CD8-positive, alpha-beta T cell (primary cell): ENCODE measurements at regions of chr19 and their contacts with region 1.

Region 1: DNA sequence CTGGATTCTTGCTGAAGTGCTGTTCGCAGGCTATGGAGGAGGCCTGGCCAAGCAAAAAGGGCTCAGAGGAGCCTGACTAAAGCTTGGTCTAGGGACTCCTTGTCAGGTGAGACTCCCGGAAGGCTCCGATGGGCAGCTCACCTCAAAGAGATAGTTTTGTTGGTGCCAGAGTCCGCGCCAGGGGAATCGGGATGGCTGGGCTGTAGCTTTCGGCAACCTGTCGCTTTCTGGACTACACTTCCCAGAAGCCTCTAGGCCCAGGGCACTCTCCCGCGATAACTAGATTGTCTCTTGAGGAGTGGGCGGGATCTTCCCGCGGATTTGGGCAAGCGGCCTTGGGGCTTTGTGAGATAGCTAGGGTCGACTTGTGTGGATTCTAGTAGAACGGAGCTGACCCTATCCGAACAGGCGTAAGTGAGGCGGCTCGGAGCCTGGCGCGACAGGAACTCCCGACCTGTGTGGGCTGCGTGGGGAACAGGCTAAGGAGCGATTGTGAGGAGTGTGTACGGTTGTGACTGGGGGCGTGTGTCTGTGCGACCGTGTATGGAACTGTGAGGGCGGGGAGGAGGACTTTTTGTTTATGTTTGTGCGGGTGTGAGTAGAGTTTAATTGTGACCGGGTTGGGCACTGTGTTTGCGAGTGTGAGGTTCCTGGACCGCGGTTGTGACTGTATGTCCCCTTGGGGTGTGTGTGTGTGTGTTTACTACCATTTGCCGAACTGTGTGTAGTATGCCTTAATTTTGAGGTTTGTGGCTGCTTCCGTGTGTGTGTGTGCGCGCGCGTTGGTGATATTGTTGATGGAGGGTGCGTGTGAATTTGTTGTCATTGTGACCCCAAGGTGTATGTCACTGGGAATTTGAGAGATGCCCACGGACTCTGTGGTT is at the start of gene ZNF345:
- DNase-seq: peak; percentile 66 to 94 (median 85)
- ATAC-seq: peak; percentile 81
- H3K4me3 ChIP-seq: peak within 1 kb of the TSS; percentile 83 to 92
- H3K4me3 Mint-ChIP-seq: no peak within 1 kb of the TSS
- H3K27ac ChIP-seq: peak within 1 kb of the TSS; percentile 74 to 94
- H3K27ac Mint-ChIP-seq: no peak within 1 kb of the TSS
- H3K4me1 ChIP-seq: peaks cover 14% of the 10 kb centered on the region
- H3K4me1 Mint-ChIP-seq: peaks cover 20% of the 10 kb centered on the region
- H3K27me3 ChIP-seq: peaks cover 0 to 2% of the 10 kb centered on the region in 2 experiments
- H3K27me3 Mint-ChIP-seq: no peaks in the 10 kb centered on the region
- CTCF ChIP-seq: no peak
- total RNA-seq, gene ZNF345: 7.8 to 8.0 TPM

Region 2: DNA sequence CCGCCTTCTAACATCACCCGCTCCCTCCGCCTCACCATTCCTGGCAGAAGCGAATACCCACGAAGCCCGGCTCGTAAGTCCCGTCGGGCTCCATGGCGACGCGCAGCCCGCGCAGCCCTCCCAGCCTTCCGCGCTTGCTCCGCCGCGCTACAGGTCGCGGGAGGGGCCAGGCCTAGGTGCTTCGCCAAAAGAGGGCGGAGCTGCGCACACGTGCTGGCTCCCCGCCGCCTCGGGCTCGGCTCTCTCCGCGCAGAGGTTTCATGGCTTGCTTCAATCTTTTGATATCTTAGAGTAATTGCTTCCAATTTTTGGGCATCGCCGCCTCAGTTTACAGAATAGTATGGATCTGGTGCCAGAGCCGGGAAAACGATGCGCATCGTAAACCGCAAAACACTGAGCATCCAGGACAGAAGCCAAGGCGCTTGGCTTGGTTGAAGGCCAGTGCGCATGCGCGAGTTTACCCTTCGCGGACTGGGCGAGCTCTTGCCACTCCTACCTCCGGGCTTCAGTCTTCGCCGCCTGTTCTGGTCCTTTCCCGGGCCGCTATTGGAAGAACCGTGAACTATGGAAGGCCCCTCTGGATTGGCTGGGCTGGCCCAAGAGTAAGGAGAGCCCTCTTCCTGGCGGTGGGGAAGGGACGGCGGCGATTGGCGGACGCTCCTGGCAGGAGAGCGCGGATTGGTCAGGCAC is 735.9 kb before region 1 on chr19 and contains the start of gene POLR2I:
- CTCF ChIA-PET with region 1: no interaction called
- POLR2A ChIA-PET with region 1: no interaction called
- intact Hi-C with region 1: loop called in 1 of 2 experiments (anchors 1 kb)
- DNase-seq: peak; percentile 96 to 100 (median 99)
- ATAC-seq: peak; percentile 85
- H3K4me3 ChIP-seq: peak within 1 kb of the TSS; percentile 71 to 73
- H3K4me3 Mint-ChIP-seq: peak within 1 kb of the TSS; percentile 92
- H3K27ac ChIP-seq: peak within 1 kb of the TSS; percentile 77 to 92
- H3K27ac Mint-ChIP-seq: peak within 1 kb of the TSS; percentile 97
- H3K4me1 ChIP-seq: peaks cover 18% of the 10 kb centered on the region
- H3K4me1 Mint-ChIP-seq: peaks cover 39% of the 10 kb centered on the region
- H3K27me3 ChIP-seq: no peaks in the 10 kb centered on the region
- H3K27me3 Mint-ChIP-seq: no peaks in the 10 kb centered on the region
- CTCF ChIP-seq: no peak
- total RNA-seq, gene POLR2I: 27.4 to 34.7 TPM

Region 3: DNA sequence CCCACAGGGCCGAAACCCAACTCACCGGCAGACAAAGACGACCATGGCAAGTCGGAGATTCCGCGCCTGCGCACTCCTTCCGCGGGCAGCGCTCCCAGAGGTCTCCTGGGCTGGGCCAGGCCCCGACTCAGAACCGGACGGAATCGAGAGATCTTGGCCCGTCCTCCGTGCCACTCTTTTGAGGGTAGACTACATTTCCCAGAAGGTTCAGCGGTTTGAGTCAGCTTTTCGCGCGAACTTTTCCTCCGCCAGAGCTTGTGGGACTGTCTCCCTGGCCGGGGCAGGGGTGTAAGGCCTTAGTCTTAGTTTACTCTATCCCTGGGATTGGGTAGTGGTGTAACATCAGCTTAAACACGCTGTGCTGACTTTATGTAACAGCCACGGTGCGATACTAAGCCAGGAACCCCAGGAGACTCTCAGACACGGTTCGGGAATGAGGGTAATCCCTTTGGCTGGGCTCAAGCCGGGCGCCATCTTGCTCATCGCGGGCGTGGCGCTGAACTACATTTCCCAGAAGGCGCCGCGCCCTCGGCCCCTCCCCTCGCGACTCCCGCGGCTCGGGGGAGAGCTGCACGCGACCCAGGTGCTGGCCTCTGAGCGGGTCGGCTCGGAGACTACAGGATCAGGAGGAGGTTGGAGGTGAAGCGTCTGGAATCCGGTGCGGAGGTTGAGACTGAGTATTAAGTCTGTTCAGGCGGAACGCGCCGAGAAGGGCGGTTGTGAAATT is 322.4 kb before region 1 on chr19 and contains the start of gene ZNF260:
- CTCF ChIA-PET with region 1: interaction called, 3 read pairs
- POLR2A ChIA-PET with region 1: no interaction called
- intact Hi-C with region 1: loop called in 1 of 2 experiments (anchors 1 kb)
- DNase-seq: peak; percentile 77 to 96 (median 92)
- ATAC-seq: peak; percentile 90
- H3K4me3 ChIP-seq: peak within 1 kb of the TSS; percentile 64 to 85
- H3K4me3 Mint-ChIP-seq: peak within 1 kb of the TSS; percentile 99
- H3K27ac ChIP-seq: peak within 1 kb of the TSS; percentile 52 to 84
- H3K27ac Mint-ChIP-seq: peak within 1 kb of the TSS; percentile 96
- H3K4me1 ChIP-seq: peaks cover 21% of the 10 kb centered on the region
- H3K4me1 Mint-ChIP-seq: peaks cover 28% of the 10 kb centered on the region
- H3K27me3 ChIP-seq: no peaks in the 10 kb centered on the region
- H3K27me3 Mint-ChIP-seq: no peaks in the 10 kb centered on the region
- CTCF ChIP-seq: no peak
- total RNA-seq, gene ZNF260: 2.8 to 4.6 TPM

Region 4: GRCh38 chr19:36796076-36796992 is 54.5 kb before region 1 on chr19:
- CTCF ChIA-PET with region 1: no interaction called
- POLR2A ChIA-PET with region 1: interaction called, 6 read pairs
- intact Hi-C with region 1: loop called (anchors 1 kb)
- DNase-seq: no peak
- ATAC-seq: no peak
- H3K4me3 ChIP-seq: peak overlapping the region; percentile 92 to 97
- H3K4me3 Mint-ChIP-seq: peak overlapping the region; percentile 97
- H3K27ac ChIP-seq: peak overlapping the region; percentile 76 to 90
- H3K27ac Mint-ChIP-seq: peak overlapping the region; percentile 98
- H3K4me1 ChIP-seq: peaks cover 3% of the 10 kb centered on the region
- H3K4me1 Mint-ChIP-seq: peaks cover 21% of the 10 kb centered on the region
- H3K27me3 ChIP-seq: no peaks in the 10 kb centered on the region
- H3K27me3 Mint-ChIP-seq: peaks cover 6% of the 10 kb centered on the region
- CTCF ChIP-seq: no peak

Region 5: DNA sequence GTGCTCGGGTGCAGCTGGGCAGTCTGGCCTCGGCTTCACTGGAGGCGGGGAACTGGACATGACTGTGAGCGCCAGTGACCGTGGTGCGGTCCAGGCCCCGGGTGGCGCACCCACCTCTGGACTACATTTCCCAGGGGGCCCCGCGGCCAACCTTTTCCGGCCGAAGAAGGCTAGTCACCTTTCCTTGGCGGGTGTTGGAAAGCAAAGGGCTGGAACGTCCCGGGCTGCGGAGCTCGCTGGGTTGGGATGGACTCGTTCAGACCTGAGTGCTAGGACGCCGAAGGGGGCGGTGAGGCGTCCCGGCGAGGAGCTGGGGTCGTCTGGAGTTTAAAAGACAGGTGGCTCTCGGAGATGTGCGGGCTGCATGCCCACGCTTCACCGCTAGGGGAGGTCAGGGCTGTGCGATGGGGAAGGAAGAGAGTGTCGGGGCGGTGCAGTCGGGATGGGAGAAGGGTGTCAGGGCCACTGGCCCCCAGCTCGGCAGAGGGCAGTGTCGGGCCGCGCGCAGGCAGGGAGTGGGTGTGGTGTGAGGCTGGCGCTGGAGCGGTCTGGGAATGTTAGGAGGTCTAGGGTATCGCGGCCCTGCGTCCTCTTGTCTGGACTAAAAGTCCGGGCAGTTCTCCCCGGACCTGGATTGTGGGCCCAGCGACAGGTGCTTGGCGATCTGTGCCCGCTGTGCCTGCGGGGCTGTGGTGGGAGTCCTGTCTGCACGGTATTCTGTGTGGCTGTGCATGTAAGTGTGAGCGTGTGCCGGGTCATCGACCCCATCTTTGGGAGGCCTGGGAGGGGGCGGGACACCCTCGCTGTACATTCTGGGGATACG is 122.4 kb after region 1 on chr19:
- CTCF ChIA-PET with region 1: no interaction called
- POLR2A ChIA-PET with region 1: no interaction called
- intact Hi-C with region 1: loop called (anchors 1 kb)
- DNase-seq: peak; percentile 49 to 92 (median 77)
- ATAC-seq: peak; percentile 90
- H3K4me3 ChIP-seq: peak overlapping the region; percentile 59 to 100
- H3K4me3 Mint-ChIP-seq: peak overlapping the region; percentile 90
- H3K27ac ChIP-seq: peak overlapping the region; percentile 53 to 66
- H3K27ac Mint-ChIP-seq: peak overlapping the region; percentile 88
- H3K4me1 ChIP-seq: peaks cover 15% of the 10 kb centered on the region
- H3K4me1 Mint-ChIP-seq: peaks cover 24% of the 10 kb centered on the region
- H3K27me3 ChIP-seq: no peaks in the 10 kb centered on the region
- H3K27me3 Mint-ChIP-seq: no peaks in the 10 kb centered on the region
- CTCF ChIP-seq: no peak

Region 6: GRCh38 chr19:37334179-37335071 is 483.6 kb after region 1 on chr19:
- CTCF ChIA-PET with region 1: no interaction called
- POLR2A ChIA-PET with region 1: no interaction called
- intact Hi-C with region 1: loop called in 1 of 2 experiments (anchors 1 kb)
- DNase-seq: peak; percentile 75 to 96 (median 87)
- ATAC-seq: peak; percentile 97
- H3K4me3 ChIP-seq: peak overlapping the region; percentile 46 to 74
- H3K4me3 Mint-ChIP-seq: peak overlapping the region; percentile 96
- H3K27ac ChIP-seq: peak overlapping the region; percentile 46 to 87
- H3K27ac Mint-ChIP-seq: peak overlapping the region; percentile 95
- H3K4me1 ChIP-seq: peaks cover 10% of the 10 kb centered on the region
- H3K4me1 Mint-ChIP-seq: peaks cover 47% of the 10 kb centered on the region
- H3K27me3 ChIP-seq: no peaks in the 10 kb centered on the region
- H3K27me3 Mint-ChIP-seq: no peaks in the 10 kb centered on the region
- CTCF ChIP-seq: no peak